Posterior cingulate gyrus (tissue), 11 donors: ENCODE measurements at regions of chr7 and their contacts with region 1.

Region 1: DNA sequence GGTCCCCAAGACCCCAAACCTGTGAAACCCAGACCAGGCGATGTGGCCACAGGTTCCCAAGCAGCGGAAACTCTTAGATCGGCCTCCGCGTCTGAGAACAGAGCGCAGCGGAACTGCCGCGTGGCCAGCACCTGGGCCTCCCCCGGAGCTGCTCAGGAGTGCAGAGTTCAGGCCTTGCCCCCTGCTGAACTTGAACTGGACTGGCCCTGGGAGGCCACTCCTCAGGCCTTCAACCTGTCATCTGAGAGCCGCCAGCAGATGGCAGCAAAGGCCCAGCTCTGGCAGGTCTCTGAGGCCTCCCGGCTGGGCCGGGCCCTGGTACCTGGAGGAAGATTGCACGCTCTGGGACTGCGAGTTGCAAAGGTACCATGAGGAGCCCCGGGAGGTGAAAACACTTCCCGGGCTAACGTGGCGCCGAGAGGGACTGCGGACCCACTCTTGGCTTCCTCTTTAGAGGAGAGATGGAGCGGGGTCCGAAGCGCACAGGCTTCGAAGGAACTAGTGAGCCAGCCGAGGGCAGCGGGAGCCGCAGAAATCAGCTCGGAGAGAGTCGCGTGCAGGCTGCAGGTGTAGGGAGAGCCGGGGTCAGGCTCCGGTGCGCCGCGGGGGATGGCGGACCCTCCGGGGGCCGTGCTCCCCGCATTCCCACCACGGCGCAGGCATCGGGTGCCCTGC is 89.1 kb downstream of the PAXIP1 start:
- DNase-seq: peak; percentile 78 to 98 (median 92)

Region 2: DNA sequence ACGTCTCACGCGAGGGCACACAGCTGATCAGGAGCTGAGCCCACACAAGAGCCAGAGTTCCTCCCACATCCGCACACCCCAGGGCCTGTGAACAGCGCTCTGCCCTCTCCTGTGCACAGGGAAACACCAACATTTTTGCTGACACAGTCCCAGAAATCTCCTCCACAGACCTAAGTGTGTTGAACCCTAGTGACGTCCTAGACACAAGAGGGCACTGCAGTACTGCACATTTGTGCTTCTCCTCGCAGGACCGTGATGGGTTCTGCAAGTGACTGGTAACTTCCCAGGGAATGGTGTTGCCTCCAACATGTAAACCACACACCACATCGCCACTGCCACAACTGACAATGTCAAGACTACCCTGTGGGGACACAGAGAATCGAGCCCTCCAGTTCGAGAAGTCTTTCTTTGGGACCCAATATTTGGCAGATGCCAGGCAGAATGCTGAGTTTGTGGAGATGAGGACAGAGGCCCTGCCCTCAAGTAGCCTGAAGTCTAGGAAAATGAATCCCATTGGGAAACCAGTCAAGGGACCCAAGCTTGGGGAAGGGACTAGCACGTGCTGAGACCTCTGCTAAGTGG is 81.1 kb before region 1 on chr7:
- intact Hi-C with region 1: loop called (anchors 5 kb)
- DNase-seq: peak in 6 of 10 donors; percentile 36 to 92 (median 61)

Region 3: DNA sequence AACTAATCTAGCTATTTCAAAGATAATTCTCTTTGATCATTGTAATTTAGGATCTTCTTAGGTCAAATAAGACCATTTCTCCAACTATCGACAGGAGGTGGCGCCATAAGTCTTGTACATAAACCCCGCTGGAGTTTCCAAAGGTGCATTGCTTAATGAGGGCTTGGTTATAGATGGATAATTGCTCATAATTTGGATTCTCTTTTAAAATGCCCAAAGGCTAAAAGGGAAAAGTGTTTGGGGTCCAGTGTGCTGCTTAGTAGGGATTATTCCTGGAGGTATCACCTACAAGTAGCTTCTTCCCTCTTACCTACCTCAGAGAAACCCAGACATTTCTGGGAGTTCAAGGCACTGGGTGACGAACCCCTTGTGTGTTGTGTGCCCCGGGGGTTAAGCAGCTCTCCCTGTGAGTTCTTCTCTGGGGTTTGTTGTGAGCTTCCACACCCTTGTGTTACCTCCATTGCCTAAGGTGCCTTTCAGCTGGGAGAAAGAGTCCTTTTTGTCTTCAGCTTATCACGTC is 13.9 kb after region 1 on chr7:
- intact Hi-C with region 1: no loop called
- DNase-seq: peak in 7 of 10 donors; percentile 65 to 87 (median 75)